Endothelial cell of umbilical vein (primary cell): ENCODE measurements at regions of chr10 and their contacts with region 1.

Region 1: GRCh38 chr10:101042667-101043355 is 11.8 kb downstream of the SFXN3 start:
- DNase-seq: peak; percentile 97
- H3K4me3 ChIP-seq: peak overlapping the region; percentile 12 to 50 (median 38)
- H3K27ac ChIP-seq: peak overlapping the region; percentile 71
- H3K4me1 ChIP-seq: peaks cover 11% of the 10 kb centered on the region
- H3K27me3 ChIP-seq: peaks cover 17% of the 10 kb centered on the region in 2 experiments
- CTCF ChIP-seq: no peak
- POLR2A ChIP-seq: peak; percentile 64

Region 2: GRCh38 chr10:101060036-101060950 is 17.5 kb after region 1 on chr10:
- CTCF ChIA-PET with region 1: interaction called, 290 read pairs
- POLR2A ChIA-PET with region 1: interaction called, 3 read pairs
- dilution Hi-C with region 1: no loop called
- intact Hi-C with region 1: loop called (anchors 1 kb)
- DNase-seq: peak; percentile 94
- H3K4me3 ChIP-seq: peak overlapping the region; percentile 89 to 97 (median 96)
- H3K27ac ChIP-seq: peak overlapping the region; percentile 99
- H3K4me1 ChIP-seq: peaks cover 36% of the 10 kb centered on the region
- H3K27me3 ChIP-seq: no peaks in the 10 kb centered on the region
- CTCF ChIP-seq: peak; percentile 89
- POLR2A ChIP-seq: peak; percentile 8

Region 3: DNA sequence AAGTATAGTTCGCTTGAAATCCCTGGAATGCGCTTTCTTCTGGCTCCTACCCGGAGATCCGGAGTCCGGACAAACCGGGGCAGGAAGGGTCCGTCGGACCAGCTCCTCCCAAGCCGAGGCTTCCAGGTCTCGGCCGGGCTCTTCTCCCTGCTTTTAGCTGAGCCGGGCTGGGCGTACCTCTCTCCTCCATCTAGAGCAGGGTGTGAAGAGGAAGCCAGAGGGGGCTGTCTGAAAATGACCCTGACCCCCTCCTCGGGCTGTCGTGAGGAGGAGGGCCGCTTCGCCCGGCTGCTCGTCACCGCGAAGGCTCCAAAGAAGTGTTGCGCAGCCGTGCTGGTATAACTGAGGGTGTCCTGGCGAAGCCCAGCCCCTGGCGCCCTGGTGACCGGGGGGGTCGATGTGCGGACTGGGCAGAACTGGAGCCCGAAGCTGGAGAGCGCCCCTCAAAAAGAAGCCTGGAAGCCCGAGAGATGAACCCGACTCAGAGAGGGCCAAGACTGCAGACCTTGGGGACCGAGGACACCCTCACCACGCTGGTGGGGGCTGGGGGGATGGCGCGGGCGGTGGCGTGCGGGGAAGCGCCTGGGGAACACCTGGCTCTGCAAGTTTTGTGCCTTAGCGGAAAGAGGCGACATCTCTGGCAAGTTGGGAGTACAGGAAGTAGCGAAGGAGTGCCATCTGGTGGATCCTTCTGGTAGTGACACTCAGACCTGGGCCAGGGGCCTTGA is 24.7 kb after region 1 on chr10:
- CTCF ChIA-PET with region 1: interaction called, 290 read pairs
- POLR2A ChIA-PET with region 1: no interaction called
- dilution Hi-C with region 1: no loop called
- intact Hi-C with region 1: loop called (anchors 1 kb)
- DNase-seq: peak; percentile 85
- H3K4me3 ChIP-seq: peak overlapping the region; percentile 47 to 60 (median 54)
- H3K27ac ChIP-seq: no peak overlapping the region
- H3K4me1 ChIP-seq: peaks cover 27% of the 10 kb centered on the region
- H3K27me3 ChIP-seq: peaks cover 0 to 1% of the 10 kb centered on the region in 2 experiments
- CTCF ChIP-seq: peak; percentile 78 to 80
- POLR2A ChIP-seq: no peak